ENCODE measurements at regions of chr4 and their contacts with region 1.

Region 1: DNA sequence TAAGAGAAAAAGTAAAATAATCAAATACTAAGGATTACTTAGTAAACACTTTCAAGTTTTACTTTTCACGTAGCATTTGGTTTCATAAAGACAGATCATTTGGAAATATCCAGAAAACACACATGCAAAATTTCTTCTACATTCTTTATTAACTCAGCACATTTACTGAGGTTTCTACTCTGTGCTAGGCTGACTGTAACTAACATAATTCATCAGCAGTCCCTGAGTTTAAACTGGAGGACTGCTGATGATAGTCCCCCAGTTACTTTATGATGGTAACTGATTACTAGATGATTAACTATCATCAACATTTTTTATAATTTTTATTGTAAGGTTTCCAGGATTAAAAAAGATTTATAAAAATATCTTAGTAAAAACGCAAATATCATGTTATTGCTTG is 12.3 kb downstream of the LEF1 start:
- DNase-seq: no peak
- H3K4me3 ChIP-seq: no peak overlapping the region
- H3K27ac ChIP-seq: no peak overlapping the region
- H3K4me1 ChIP-seq: no peaks in the 10 kb centered on the region
- H3K27me3 ChIP-seq: no peaks in the 10 kb centered on the region
- CTCF ChIP-seq: no peak

Region 2: GRCh38 chr4:107902715-107903114 is 253.7 kb before region 1 on chr4:
- CTCF ChIA-PET with region 1: no interaction called
- POLR2A ChIA-PET with region 1: no interaction called
- intact Hi-C with region 1: no loop called
- DNase-seq: no peak
- H3K4me3 ChIP-seq: no peak overlapping the region
- H3K27ac ChIP-seq: no peak overlapping the region
- H3K4me1 ChIP-seq: peaks cover 3% of the 10 kb centered on the region; the same call in 1 of the 2 replicates
- H3K27me3 ChIP-seq: no peaks in the 10 kb centered on the region
- CTCF ChIP-seq: no peak

Region 3: GRCh38 chr4:108051343-108051742 is 105.0 kb before region 1 on chr4:
- CTCF ChIA-PET with region 1: interaction called, 22 read pairs
- POLR2A ChIA-PET with region 1: no interaction called
- intact Hi-C with region 1: no loop called
- DNase-seq: no peak
- H3K4me3 ChIP-seq: no peak overlapping the region
- H3K27ac ChIP-seq: no peak overlapping the region
- H3K4me1 ChIP-seq: no peaks in the 10 kb centered on the region
- H3K27me3 ChIP-seq: no peaks in the 10 kb centered on the region
- CTCF ChIP-seq: no peak

Region 4: DNA sequence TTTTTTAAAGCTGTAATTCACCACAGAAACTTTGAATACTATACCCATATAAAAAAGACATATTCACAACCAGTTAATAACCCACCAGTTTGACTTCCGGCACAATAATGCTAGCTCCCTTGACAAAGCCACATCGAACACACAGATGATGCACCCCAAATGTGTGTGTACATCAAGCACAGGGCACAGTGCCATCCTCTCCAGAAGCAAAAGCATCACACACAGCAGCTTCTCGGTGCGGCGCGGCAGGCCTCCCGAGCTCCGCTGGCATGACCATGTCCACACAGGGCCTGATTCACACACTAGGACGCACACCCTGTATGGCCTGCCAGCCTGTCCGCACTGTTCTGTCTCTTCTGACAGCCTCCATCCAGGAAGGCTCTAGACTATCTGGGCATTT is 75.6 kb before region 1 on chr4:
- CTCF ChIA-PET with region 1: no interaction called
- POLR2A ChIA-PET with region 1: no interaction called
- intact Hi-C with region 1: no loop called
- DNase-seq: no peak
- H3K4me3 ChIP-seq: no peak overlapping the region
- H3K27ac ChIP-seq: no peak overlapping the region
- H3K4me1 ChIP-seq: no peaks in the 10 kb centered on the region
- H3K27me3 ChIP-seq: no peaks in the 10 kb centered on the region
- CTCF ChIP-seq: no peak

Measured in PC-9 (cell line).